GM18951 (cell line): ENCODE measurements at regions of chr11 and their contacts with region 1.

Region 1: GRCh38 chr11:63023841-63024648 is 8.4 kb upstream of the SLC22A8 start:
- POLR2A ChIP-seq: no peak

Region 2: GRCh38 chr11:62905927-62906531 is 118.0 kb before region 1 on chr11:
- in situ Hi-C with region 1: loop called (anchors 5 kb)
- POLR2A ChIP-seq: no peak